Naive thymus-derived CD4-positive, alpha-beta T cell (primary cell): ENCODE measurements at regions of chr7 and their contacts with region 1.

Region 1: DNA sequence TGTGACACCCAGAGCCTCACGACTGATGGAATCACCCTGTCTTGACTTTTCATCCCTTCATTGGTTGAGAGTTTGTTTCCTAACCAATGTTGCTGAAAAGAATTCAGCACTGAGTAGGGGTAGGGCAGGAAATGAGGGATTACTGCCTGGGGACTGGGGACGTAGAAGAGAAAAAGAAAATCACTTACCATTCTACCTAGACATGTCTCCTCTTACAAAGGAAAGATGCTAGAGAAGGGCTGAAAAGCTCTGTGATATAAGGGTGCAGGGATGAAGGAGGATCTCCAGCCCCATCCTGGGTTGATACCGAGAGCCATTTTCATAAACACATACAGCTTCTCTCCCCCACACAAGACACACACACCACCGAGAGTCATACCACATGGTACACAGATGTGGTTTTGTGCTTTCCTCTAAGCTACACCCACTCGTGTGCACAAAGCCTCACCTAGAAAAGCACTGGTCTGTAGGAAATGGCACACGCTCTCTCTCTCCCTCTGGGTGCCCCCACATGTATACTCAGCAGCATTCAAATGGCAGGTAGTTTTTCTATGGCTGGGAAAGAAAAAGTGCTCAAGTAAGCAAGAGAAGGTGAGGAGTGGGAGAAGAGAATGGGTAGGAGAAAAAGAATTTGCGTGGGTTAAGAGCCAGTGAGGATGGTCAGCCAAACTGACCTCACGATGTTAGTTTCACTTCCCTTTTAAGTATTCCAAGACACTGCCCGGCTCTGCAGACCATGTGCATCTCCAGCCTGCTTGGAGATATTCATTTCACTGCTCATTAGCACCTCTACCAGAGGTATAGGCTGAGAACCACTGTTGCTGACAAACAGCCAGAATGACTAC is 85.8 kb downstream of the CALD1 start:
- DNase-seq: peak in 8 of 9 donors; percentile 43 to 79 (median 76)
- ATAC-seq: peak; percentile 91
- H3K4me3 ChIP-seq: peak overlapping the region; percentile 51
- H3K4me3 Mint-ChIP-seq: peak overlapping the region; percentile 64 to 90 (median 84)
- H3K27ac ChIP-seq: peak overlapping the region; percentile 68
- H3K27ac Mint-ChIP-seq: peak overlapping the region; percentile 88 to 96 (median 92)
- H3K4me1 ChIP-seq: peaks cover 0 to 13% of the 10 kb centered on the region in 2 donors
- H3K4me1 Mint-ChIP-seq: peaks cover 8 to 76% (median 58%) of the 10 kb centered on the region in 7 donors
- H3K27me3 ChIP-seq: no peaks in the 10 kb centered on the region
- H3K27me3 Mint-ChIP-seq: no peaks in the 10 kb centered on the region

Region 2: GRCh38 chr7:134710859-134711624 is 154.2 kb before region 1 on chr7:
- CTCF ChIA-PET with region 1: no interaction called
- POLR2A ChIA-PET with region 1: no interaction called
- intact Hi-C with region 1: loop called in 1 of 2 experiments (anchors 1 kb)
- DNase-seq: peak; percentile 15 to 92 (median 88)
- ATAC-seq: peak; percentile 96
- H3K4me3 ChIP-seq: peak overlapping the region; percentile 15
- H3K4me3 Mint-ChIP-seq: peak overlapping the region; percentile 32 to 77 (median 66)
- H3K27ac ChIP-seq: peak overlapping the region; percentile 77
- H3K27ac Mint-ChIP-seq: peak overlapping the region; percentile 86 to 99 (median 94)
- H3K4me1 ChIP-seq: peaks cover 10 to 15% of the 10 kb centered on the region in 2 donors
- H3K4me1 Mint-ChIP-seq: peaks cover 11 to 32% (median 22%) of the 10 kb centered on the region in 7 donors
- H3K27me3 ChIP-seq: no peaks in the 10 kb centered on the region
- H3K27me3 Mint-ChIP-seq: no peaks in the 10 kb centered on the region

Region 3: GRCh38 chr7:134750083-134751062 is 114.8 kb before region 1 on chr7:
- CTCF ChIA-PET with region 1: no interaction called
- POLR2A ChIA-PET with region 1: no interaction called
- intact Hi-C with region 1: loop called in 1 of 2 experiments (anchors 5 kb)
- DNase-seq: peak; percentile 26 to 68 (median 49)
- ATAC-seq: peak; percentile 87
- H3K4me3 ChIP-seq: no peak overlapping the region
- H3K4me3 Mint-ChIP-seq: no peak overlapping the region
- H3K27ac ChIP-seq: no peak overlapping the region
- H3K27ac Mint-ChIP-seq: no peak overlapping the region
- H3K4me1 ChIP-seq: no peaks in the 10 kb centered on the region
- H3K4me1 Mint-ChIP-seq: peaks cover 0 to 10% (median 0%) of the 10 kb centered on the region in 7 donors
- H3K27me3 ChIP-seq: no peaks in the 10 kb centered on the region
- H3K27me3 Mint-ChIP-seq: no peaks in the 10 kb centered on the region

Region 4: DNA sequence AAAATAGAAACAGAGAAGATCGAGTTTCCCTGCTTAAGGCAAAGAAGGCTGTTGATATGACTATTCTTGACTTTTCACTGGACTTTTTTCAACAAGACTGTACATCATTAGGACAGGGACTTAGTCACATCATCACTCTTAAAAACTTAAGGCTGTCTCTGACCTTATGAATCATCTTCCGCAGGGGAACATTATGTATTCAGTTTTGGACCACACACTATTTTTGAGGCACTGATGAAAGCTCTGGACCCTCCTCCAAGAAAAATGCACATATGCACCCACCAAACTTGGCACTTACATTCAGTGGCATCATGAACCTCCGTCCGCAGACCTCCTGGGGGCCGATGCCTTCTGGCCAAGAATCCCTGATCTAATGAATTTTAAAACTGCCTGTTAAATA is 10.6 kb after region 1 on chr7:
- CTCF ChIA-PET with region 1: no interaction called
- POLR2A ChIA-PET with region 1: interaction called, 12 read pairs
- intact Hi-C with region 1: no loop called
- DNase-seq: no peak
- ATAC-seq: no peak
- H3K4me3 ChIP-seq: no peak overlapping the region
- H3K4me3 Mint-ChIP-seq: no peak overlapping the region
- H3K27ac ChIP-seq: no peak overlapping the region
- H3K27ac Mint-ChIP-seq: no peak overlapping the region
- H3K4me1 ChIP-seq: no peaks in the 10 kb centered on the region
- H3K4me1 Mint-ChIP-seq: peaks cover 3 to 21% (median 13%) of the 10 kb centered on the region in 7 donors
- H3K27me3 ChIP-seq: no peaks in the 10 kb centered on the region
- H3K27me3 Mint-ChIP-seq: peaks cover 0 to 5% (median 0%) of the 10 kb centered on the region in 5 donors

Region 5: DNA sequence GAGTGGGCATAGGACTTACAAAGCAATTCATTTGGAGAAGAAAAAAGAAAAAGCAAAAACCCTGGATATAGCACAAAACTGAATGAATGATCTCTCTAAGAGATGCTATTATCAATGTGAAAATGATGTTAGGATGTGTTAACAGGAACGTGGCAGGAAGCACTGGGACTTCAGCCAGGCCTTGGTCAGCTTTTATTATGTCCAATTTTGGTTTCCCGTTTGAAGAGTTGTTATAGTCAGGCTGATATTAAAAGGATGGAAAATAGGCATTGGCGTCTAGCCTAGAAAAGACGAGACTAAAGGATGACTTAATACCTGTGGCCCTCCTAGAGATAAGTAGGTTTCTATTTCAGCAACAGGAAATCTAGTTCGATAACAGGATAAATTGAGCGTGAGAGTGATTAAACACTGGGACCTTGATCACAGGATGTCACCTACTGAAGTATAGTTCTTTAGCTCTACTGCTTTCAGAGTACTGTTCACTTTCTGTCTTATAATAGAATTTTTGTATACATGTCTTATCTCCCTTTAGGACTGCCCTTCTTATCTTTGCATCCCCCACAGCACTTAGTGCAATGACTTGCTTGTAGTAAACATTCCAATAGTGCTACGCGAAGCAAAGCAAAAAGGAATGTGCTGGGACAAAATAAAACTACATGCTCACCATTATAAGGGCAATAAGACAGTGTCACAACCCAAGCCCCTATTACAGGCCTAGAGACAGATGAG is 21.3 kb after region 1 on chr7:
- CTCF ChIA-PET with region 1: no interaction called
- POLR2A ChIA-PET with region 1: interaction called, 19 read pairs
- intact Hi-C with region 1: loop called in 1 of 2 experiments (anchors 1 kb)
- DNase-seq: peak in 6 of 9 donors; percentile 10 to 45 (median 34)
- ATAC-seq: peak; percentile 52
- H3K4me3 ChIP-seq: no peak overlapping the region
- H3K4me3 Mint-ChIP-seq: peak overlapping the region in 8 of 10 donors; percentile 40 to 65 (median 59)
- H3K27ac ChIP-seq: peak overlapping the region; percentile 48
- H3K27ac Mint-ChIP-seq: peak overlapping the region in 8 of 9 donors; percentile 79 to 95 (median 86)
- H3K4me1 ChIP-seq: peaks cover 0 to 23% of the 10 kb centered on the region in 2 donors
- H3K4me1 Mint-ChIP-seq: peaks cover 17 to 41% (median 39%) of the 10 kb centered on the region in 7 donors
- H3K27me3 ChIP-seq: no peaks in the 10 kb centered on the region
- H3K27me3 Mint-ChIP-seq: peaks cover 0 to 5% (median 5%) of the 10 kb centered on the region in 5 donors

Region 6: GRCh38 chr7:134943764-134944400 is 78.7 kb after region 1 on chr7:
- CTCF ChIA-PET with region 1: no interaction called
- POLR2A ChIA-PET with region 1: interaction called, 5 read pairs
- intact Hi-C with region 1: loop called in 1 of 2 experiments (anchors 1 kb)
- DNase-seq: no peak
- ATAC-seq: no peak
- H3K4me3 ChIP-seq: no peak overlapping the region
- H3K4me3 Mint-ChIP-seq: no peak overlapping the region
- H3K27ac ChIP-seq: no peak overlapping the region
- H3K27ac Mint-ChIP-seq: peak overlapping the region in 1 of 9 donors; percentile 20
- H3K4me1 ChIP-seq: peaks cover 0 to 13% of the 10 kb centered on the region in 2 donors
- H3K4me1 Mint-ChIP-seq: peaks cover 7 to 33% (median 22%) of the 10 kb centered on the region in 7 donors
- H3K27me3 ChIP-seq: no peaks in the 10 kb centered on the region
- H3K27me3 Mint-ChIP-seq: peaks cover 0 to 4% (median 0%) of the 10 kb centered on the region in 5 donors

Region 7: DNA sequence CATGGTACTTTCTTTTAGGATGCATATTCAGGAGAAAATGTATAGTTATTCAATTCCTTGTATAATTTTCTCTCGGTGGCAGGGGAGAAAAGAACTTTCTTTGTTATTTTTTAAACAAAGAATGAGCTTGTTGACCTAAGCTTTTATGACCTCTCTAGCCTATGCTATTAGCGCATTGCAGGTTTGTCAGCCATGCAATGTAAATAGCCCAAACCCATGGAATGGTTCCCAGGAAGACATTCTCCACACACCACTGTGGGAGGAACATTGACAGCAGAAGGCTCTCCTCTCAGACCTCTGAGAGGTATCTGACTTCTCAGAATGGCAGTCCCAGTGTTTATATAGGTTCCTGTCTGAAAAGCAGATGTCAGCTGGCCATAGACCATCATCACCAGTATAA is 101.5 kb after region 1 on chr7:
- CTCF ChIA-PET with region 1: no interaction called
- POLR2A ChIA-PET with region 1: no interaction called
- intact Hi-C with region 1: no loop called
- DNase-seq: no peak
- ATAC-seq: no peak
- H3K4me3 ChIP-seq: no peak overlapping the region
- H3K4me3 Mint-ChIP-seq: no peak overlapping the region
- H3K27ac ChIP-seq: no peak overlapping the region
- H3K27ac Mint-ChIP-seq: no peak overlapping the region
- H3K4me1 ChIP-seq: no peaks in the 10 kb centered on the region
- H3K4me1 Mint-ChIP-seq: peaks cover 0 to 13% (median 8%) of the 10 kb centered on the region in 7 donors
- H3K27me3 ChIP-seq: no peaks in the 10 kb centered on the region
- H3K27me3 Mint-ChIP-seq: peaks cover 0 to 26% (median 7%) of the 10 kb centered on the region in 5 donors

Region 8: DNA sequence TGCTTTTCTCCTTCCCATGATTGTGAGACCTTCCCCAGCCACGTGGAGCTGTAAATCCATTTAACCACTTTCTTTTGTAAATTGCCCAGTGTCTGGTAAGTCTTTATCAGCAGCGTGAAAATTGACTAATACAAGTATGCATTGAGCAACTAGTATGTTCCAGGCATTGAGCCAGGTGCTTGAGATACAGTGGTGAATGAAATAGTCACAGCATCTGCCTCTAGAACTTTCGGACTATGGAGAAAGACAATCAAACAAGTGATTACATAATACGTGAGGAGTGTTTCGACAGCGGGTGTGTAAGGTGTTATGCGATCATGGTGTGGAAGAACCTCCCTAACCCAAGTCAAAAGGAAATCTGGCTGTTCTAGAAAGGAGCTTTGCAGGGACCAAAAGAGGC is 670.9 kb after region 1 on chr7:
- CTCF ChIA-PET with region 1: no interaction called
- POLR2A ChIA-PET with region 1: no interaction called
- intact Hi-C with region 1: no loop called
- DNase-seq: no peak
- ATAC-seq: peak; percentile 24
- H3K4me3 ChIP-seq: no peak overlapping the region
- H3K4me3 Mint-ChIP-seq: no peak overlapping the region
- H3K27ac ChIP-seq: no peak overlapping the region
- H3K27ac Mint-ChIP-seq: no peak overlapping the region
- H3K4me1 ChIP-seq: no peaks in the 10 kb centered on the region
- H3K4me1 Mint-ChIP-seq: no peaks in the 10 kb centered on the region
- H3K27me3 ChIP-seq: no peaks in the 10 kb centered on the region
- H3K27me3 Mint-ChIP-seq: peaks cover 9 to 33% (median 15%) of the 10 kb centered on the region in 5 donors